Sigmoid colon (tissue), 7 donors: ENCODE measurements at regions of chr17 and their contacts with region 1.

Region 1: GRCh38 chr17:1999557-2000251 is 25.4 kb downstream of the RTN4RL1 start:
- DNase-seq: peak; percentile 78
- H3K4me3 ChIP-seq: no peak overlapping the region
- H3K27ac ChIP-seq: peak overlapping the region; percentile 73 to 90 (median 82)
- H3K4me1 ChIP-seq: peaks cover 0 to 35% (median 29%) of the 10 kb centered on the region in 4 donors
- H3K27me3 ChIP-seq: no peaks in the 10 kb centered on the region
- CTCF ChIP-seq: no peak
- EP300 ChIP-seq: no peak
- POLR2A ChIP-seq: no peak

Region 2: DNA sequence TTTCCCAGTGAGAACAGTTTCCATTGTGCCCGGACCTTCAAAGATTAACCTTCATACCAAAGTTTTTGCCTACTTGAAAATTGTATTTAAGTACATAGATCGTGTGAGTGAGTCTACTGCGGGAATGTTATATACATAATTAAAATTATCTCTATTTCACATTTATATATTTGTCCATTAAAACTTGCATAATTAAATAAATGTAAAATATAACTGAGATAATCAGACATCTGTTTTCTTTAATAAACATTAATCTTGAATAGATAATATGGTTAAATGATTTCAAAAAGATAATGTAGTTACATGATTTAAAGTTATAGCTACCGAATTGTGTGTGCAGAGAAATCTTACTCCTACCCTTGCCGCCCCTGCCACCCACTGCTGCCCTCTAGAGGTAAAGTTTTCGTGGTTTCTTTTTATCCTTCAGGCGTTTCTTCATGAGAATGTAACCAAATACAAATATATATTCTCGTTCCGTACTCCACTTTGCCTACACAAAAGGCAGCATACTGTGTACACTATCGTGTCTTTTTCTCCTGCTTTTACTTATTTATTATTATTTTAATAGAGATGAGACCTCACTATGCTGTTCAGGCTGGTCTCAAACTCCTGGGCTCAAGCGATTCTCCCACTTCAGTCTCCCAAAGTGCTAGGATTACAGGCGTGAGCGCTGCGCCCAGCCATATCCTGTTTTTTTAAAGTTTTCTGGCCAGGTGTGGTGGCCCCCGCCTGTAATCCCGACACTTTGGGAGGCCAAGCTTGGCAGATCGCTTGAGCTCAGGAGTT is 134.3 kb before region 1 on chr17:
- intact Hi-C with region 1: no loop called
- DNase-seq: no peak
- H3K4me3 ChIP-seq: no peak overlapping the region
- H3K27ac ChIP-seq: no peak overlapping the region
- H3K4me1 ChIP-seq: no peaks in the 10 kb centered on the region
- H3K27me3 ChIP-seq: no peaks in the 10 kb centered on the region
- CTCF ChIP-seq: peak in 3 of 4 experiments; percentile 37 to 54 (median 41)
- EP300 ChIP-seq: no peak
- POLR2A ChIP-seq: no peak

Region 3: GRCh38 chr17:2025622-2026310 is 26.1 kb after region 1 on chr17:
- intact Hi-C with region 1: loop called (anchors 2 kb)
- DNase-seq: peak; percentile 83
- H3K4me3 ChIP-seq: peak overlapping the region; percentile 21 to 55 (median 48)
- H3K27ac ChIP-seq: peak overlapping the region in 2 of 4 donors; percentile 19 to 20
- H3K4me1 ChIP-seq: peaks cover 0 to 38% (median 38%) of the 10 kb centered on the region in 4 donors
- H3K27me3 ChIP-seq: peaks cover 20 to 74% (median 34%) of the 10 kb centered on the region in 3 donors
- CTCF ChIP-seq: peak; percentile 55 to 74 (median 60)
- EP300 ChIP-seq: no peak
- POLR2A ChIP-seq: no peak